GM12878 (cell line): ENCODE measurements at regions of chr10 and their contacts with region 1.

Region 1: DNA sequence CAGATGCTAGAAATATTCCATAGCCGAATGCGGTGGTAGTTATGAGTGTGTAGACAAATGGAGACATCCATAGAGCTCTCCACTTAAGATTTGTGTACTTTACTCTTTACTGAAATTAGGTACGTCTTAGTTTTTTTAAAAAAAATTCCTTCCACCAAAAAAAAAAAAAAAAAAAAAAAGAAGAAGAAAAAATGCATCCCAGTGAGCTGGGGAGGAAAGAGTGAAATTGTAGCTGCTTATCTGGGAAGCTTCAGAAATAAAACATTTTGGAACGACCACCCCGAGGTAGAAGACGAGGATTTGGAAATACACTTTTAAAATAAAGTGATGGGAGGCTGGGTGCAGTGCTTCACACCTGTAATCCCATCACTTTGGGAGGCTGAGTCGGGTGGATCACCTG is 53.8 kb downstream of the RGS10 start:
- DNase-seq: no peak
- ATAC-seq: no peak
- H3K4me3 ChIP-seq: no peak overlapping the region
- H3K27ac ChIP-seq: no peak overlapping the region
- H3K4me1 ChIP-seq: peaks cover 8% of the 10 kb centered on the region
- H3K27me3 ChIP-seq: no peaks in the 10 kb centered on the region
- CTCF ChIP-seq: no peak
- EP300 ChIP-seq: no peak
- POLR2A ChIP-seq: no peak
- RAD21 ChIP-seq: no peak

Region 2: GRCh38 chr10:119478111-119478802 is 10.4 kb before region 1 on chr10:
- CTCF ChIA-PET with region 1: interaction called, 23 read pairs
- POLR2A ChIA-PET with region 1: interaction called, 8 read pairs
- RAD21 ChIA-PET with region 1: interaction called, 10 read pairs
- SMC1A ChIA-PET with region 1: interaction called, 13 read pairs
- in situ Hi-C with region 1: no loop called
- intact Hi-C with region 1: no loop called
- DNase-seq: peak; percentile 46
- ATAC-seq: peak; percentile 98
- H3K4me3 ChIP-seq: peak overlapping the region; percentile 35; the same call in 1 of the 2 replicates
- H3K27ac ChIP-seq: peak overlapping the region; percentile 30; the same call in 1 of the 2 replicates
- H3K4me1 ChIP-seq: peaks cover 25% of the 10 kb centered on the region
- H3K27me3 ChIP-seq: no peaks in the 10 kb centered on the region
- CTCF ChIP-seq: no peak
- EP300 ChIP-seq: peak in 1 of 2 experiments; percentile 27; a peak in 1 of 4 replicates
- POLR2A ChIP-seq: no peak
- RAD21 ChIP-seq: no peak